Caco-2 (cell line): ENCODE measurements at regions of chr1 and their contacts with region 1.

Region 1: GRCh38 chr1:244835276-244836134 is at the start of gene COX20:
- DNase-seq: peak; percentile 93 to 96
- H3K4me3 ChIP-seq: peak within 1 kb of the TSS; percentile 95
- H3K4me3 Mint-ChIP-seq: peak within 1 kb of the TSS; percentile 97
- H3K27ac Mint-ChIP-seq: peak within 1 kb of the TSS; percentile 100
- H3K4me1 ChIP-seq: peaks cover 31% of the 10 kb centered on the region
- H3K4me1 Mint-ChIP-seq: peaks cover 20% of the 10 kb centered on the region
- H3K27me3 ChIP-seq: no peaks in the 10 kb centered on the region
- H3K27me3 Mint-ChIP-seq: no peaks in the 10 kb centered on the region
- CTCF ChIP-seq: no peak
- total RNA-seq, gene COX20: 68.0 and 79.3 TPM in 2 replicates

Region 2: GRCh38 chr1:244451951-244452795 is 383.3 kb before region 1 on chr1:
- CTCF ChIA-PET with region 1: no interaction called
- POLR2A ChIA-PET with region 1: no interaction called
- intact Hi-C with region 1: loop called (anchors 10 kb)
- DNase-seq: peak; percentile 98 to 99
- H3K4me3 ChIP-seq: peak overlapping the region; percentile 96
- H3K4me3 Mint-ChIP-seq: peak overlapping the region; percentile 76
- H3K27ac Mint-ChIP-seq: peak overlapping the region; percentile 75
- H3K4me1 ChIP-seq: peaks cover 38% of the 10 kb centered on the region
- H3K4me1 Mint-ChIP-seq: peaks cover 49% of the 10 kb centered on the region
- H3K27me3 ChIP-seq: no peaks in the 10 kb centered on the region
- H3K27me3 Mint-ChIP-seq: no peaks in the 10 kb centered on the region
- CTCF ChIP-seq: peak; percentile 30 to 33

Region 3: DNA sequence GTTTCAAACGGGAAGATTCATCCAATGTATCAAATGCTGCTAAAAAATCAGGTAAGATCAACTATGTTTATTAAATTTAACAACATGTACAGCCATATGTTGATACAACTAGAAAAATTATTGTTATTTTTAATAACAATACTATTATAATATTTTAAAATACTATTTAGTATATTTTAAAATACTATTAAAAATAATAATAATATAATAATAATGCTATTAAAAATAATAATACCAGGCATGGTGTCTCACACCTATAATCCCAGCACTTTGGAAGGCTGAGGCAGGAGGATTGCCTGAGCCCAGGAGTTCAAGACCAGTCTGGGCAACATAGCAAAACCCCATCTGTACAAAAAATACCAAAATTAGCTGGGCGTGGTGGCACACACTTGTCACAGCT is 319.8 kb before region 1 on chr1:
- CTCF ChIA-PET with region 1: no interaction called
- POLR2A ChIA-PET with region 1: no interaction called
- intact Hi-C with region 1: no loop called
- DNase-seq: no peak
- H3K4me3 ChIP-seq: no peak overlapping the region
- H3K4me3 Mint-ChIP-seq: no peak overlapping the region
- H3K27ac Mint-ChIP-seq: no peak overlapping the region
- H3K4me1 ChIP-seq: 0 out of 2 replicates have a peak, but pooled peaks cover 3% of the 10 kb centered on the region
- H3K4me1 Mint-ChIP-seq: peaks cover 7% of the 10 kb centered on the region
- H3K27me3 ChIP-seq: no peaks in the 10 kb centered on the region
- H3K27me3 Mint-ChIP-seq: no peaks in the 10 kb centered on the region
- CTCF ChIP-seq: no peak

Region 4: GRCh38 chr1:244730153-244730933 is 105.2 kb before region 1 on chr1:
- CTCF ChIA-PET with region 1: no interaction called
- POLR2A ChIA-PET with region 1: interaction called, 6 read pairs
- intact Hi-C with region 1: loop called (anchors 2 kb)
- DNase-seq: peak; percentile 67 to 78
- H3K4me3 ChIP-seq: peak overlapping the region; percentile 63
- H3K4me3 Mint-ChIP-seq: peak overlapping the region; percentile 83
- H3K27ac Mint-ChIP-seq: peak overlapping the region; percentile 86
- H3K4me1 ChIP-seq: peaks cover 13% of the 10 kb centered on the region
- H3K4me1 Mint-ChIP-seq: peaks cover 7% of the 10 kb centered on the region
- H3K27me3 ChIP-seq: no peaks in the 10 kb centered on the region
- H3K27me3 Mint-ChIP-seq: no peaks in the 10 kb centered on the region
- CTCF ChIP-seq: no peak

Region 5: DNA sequence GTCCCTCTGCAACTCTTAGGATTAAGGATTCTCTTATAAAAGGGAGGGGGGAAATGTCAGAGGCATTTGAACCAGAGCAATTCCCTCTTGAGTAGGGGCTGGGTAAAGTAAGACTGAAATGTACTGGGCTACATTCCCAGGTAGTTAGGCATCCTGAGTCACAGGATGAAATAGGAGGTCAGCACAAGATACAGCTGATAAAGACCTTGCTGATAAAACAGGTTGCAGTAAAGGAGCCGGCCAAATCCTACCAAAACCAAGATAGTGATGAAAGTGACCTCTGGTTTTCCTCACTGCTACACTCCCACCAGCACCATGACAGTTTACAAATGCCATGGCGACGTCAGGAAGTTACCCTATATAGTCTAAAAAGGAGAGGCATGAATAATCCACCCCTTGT is 14.4 kb before region 1 on chr1:
- CTCF ChIA-PET with region 1: interaction called, 3 read pairs
- POLR2A ChIA-PET with region 1: interaction called, 6 read pairs
- intact Hi-C with region 1: loop called (anchors 1 kb)
- DNase-seq: peak; percentile 70 to 82
- H3K4me3 ChIP-seq: no peak overlapping the region
- H3K4me3 Mint-ChIP-seq: peak overlapping the region; percentile 39
- H3K27ac Mint-ChIP-seq: peak overlapping the region; percentile 90
- H3K4me1 ChIP-seq: peaks cover 50% of the 10 kb centered on the region
- H3K4me1 Mint-ChIP-seq: peaks cover 15% of the 10 kb centered on the region
- H3K27me3 ChIP-seq: no peaks in the 10 kb centered on the region
- H3K27me3 Mint-ChIP-seq: no peaks in the 10 kb centered on the region
- CTCF ChIP-seq: no peak

Region 6: GRCh38 chr1:244970661-244971551 is 135.4 kb after region 1 on chr1:
- CTCF ChIA-PET with region 1: interaction called, 3 read pairs
- POLR2A ChIA-PET with region 1: interaction called, 3 read pairs
- intact Hi-C with region 1: loop called (anchors 1 kb)
- DNase-seq: peak; percentile 97
- H3K4me3 ChIP-seq: peak overlapping the region; percentile 82
- H3K4me3 Mint-ChIP-seq: peak overlapping the region; percentile 91
- H3K27ac Mint-ChIP-seq: peak overlapping the region; percentile 99
- H3K4me1 ChIP-seq: peaks cover 16% of the 10 kb centered on the region
- H3K4me1 Mint-ChIP-seq: peaks cover 20% of the 10 kb centered on the region
- H3K27me3 ChIP-seq: no peaks in the 10 kb centered on the region
- H3K27me3 Mint-ChIP-seq: no peaks in the 10 kb centered on the region
- CTCF ChIP-seq: peak; percentile 54 to 79